ENCODE measurements at regions of chrX and their contacts with region 1.

Region 1: GRCh38 chrX:84729809-84730208 is 227.6 kb upstream of the HDX start:
- DNase-seq: peak; percentile 31
- ATAC-seq: peak; percentile 98
- H3K4me3 ChIP-seq: no peak overlapping the region
- H3K27ac ChIP-seq: no peak overlapping the region
- H3K4me1 ChIP-seq: peaks cover 2% of the 10 kb centered on the region
- H3K27me3 ChIP-seq: no peaks in the 10 kb centered on the region
- CTCF ChIP-seq: peak; percentile 73
- POLR2A ChIP-seq: no peak
- RAD21 ChIP-seq: peak; percentile 69

Region 2: DNA sequence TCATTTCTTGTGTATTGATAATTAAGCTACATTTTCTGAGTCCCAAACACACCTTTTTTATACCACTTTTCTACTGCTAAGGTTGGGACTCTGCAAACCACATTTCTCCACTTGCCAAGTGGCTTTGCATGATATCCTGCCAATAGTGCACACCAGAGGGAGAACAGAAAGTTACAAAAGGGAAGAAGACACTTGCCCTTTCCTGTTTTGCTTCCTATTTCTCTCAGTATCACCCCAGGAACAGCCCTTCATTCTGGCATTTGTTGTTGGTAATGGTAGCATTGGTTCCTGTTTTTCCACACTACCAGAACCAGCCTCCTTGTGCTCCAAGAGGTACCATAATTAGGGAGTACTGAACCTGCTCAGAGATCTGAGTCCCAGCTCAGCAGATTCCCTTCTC is 314.7 kb before region 1 on chrX:
- CTCF ChIA-PET with region 1: no interaction called
- POLR2A ChIA-PET with region 1: no interaction called
- dilution Hi-C with region 1: no loop called
- in situ Hi-C with region 1: no loop called
- intact Hi-C with region 1: no loop called
- DNase-seq: no peak
- ATAC-seq: no peak
- H3K4me3 ChIP-seq: no peak overlapping the region
- H3K27ac ChIP-seq: no peak overlapping the region
- H3K4me1 ChIP-seq: no peaks in the 10 kb centered on the region
- H3K27me3 ChIP-seq: no peaks in the 10 kb centered on the region
- CTCF ChIP-seq: no peak
- POLR2A ChIP-seq: no peak
- RAD21 ChIP-seq: no peak

Region 3: GRCh38 chrX:84907324-84907968 is 177.6 kb after region 1 on chrX:
- CTCF ChIA-PET with region 1: interaction called, 3 read pairs
- POLR2A ChIA-PET with region 1: no interaction called
- dilution Hi-C with region 1: no loop called
- in situ Hi-C with region 1: no loop called
- intact Hi-C with region 1: loop called (anchors 1 kb)
- DNase-seq: peak; percentile 5
- ATAC-seq: peak; percentile 49; the same call in 1 of the 2 replicates
- H3K4me3 ChIP-seq: no peak overlapping the region
- H3K27ac ChIP-seq: no peak overlapping the region
- H3K4me1 ChIP-seq: no peaks in the 10 kb centered on the region
- H3K27me3 ChIP-seq: no peaks in the 10 kb centered on the region
- CTCF ChIP-seq: peak; percentile 37
- POLR2A ChIP-seq: no peak
- RAD21 ChIP-seq: peak; percentile 26

Region 4: DNA sequence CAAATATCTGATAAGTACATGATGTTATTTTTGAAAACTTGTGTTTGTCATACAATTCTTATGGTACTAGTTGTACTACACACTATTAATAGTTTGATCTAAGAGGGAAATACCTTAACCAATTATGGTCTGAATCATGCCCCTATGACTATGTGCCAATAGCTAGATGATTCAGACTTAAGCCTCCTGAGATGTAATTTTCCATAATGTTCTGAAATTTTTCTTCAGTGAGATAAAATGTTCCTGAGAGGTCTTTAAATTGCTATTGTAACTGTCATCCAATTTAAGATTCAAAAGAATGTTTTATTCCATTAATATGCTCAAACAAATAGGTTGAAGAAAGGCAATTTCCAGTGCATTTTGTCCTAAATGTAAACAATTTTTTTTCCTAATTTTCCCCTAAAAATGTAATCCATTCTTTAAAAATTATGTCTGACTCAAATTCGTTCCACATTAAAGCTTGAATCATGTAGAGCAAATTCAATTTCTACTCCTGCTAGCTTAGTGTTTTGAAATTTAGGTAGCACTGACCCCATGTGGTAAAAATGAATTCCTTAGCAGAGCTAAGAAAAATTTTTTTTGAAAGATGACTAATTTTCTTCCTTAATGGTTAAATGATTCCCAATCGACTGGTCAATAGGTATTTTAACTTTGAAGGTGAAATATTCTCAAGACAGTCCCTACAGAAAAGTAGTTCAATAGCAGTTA is 323.0 kb after region 1 on chrX:
- CTCF ChIA-PET with region 1: interaction called, 3 read pairs
- POLR2A ChIA-PET with region 1: no interaction called
- dilution Hi-C with region 1: no loop called
- in situ Hi-C with region 1: no loop called
- intact Hi-C with region 1: loop called (anchors 1 kb)
- DNase-seq: peak; percentile 86
- ATAC-seq: peak; percentile 81
- H3K4me3 ChIP-seq: no peak overlapping the region
- H3K27ac ChIP-seq: peak overlapping the region; percentile 49; the same call in 1 of the 2 replicates
- H3K4me1 ChIP-seq: no peaks in the 10 kb centered on the region
- H3K27me3 ChIP-seq: no peaks in the 10 kb centered on the region
- CTCF ChIP-seq: peak; percentile 53
- POLR2A ChIP-seq: no peak
- RAD21 ChIP-seq: peak; percentile 51

Region 5: DNA sequence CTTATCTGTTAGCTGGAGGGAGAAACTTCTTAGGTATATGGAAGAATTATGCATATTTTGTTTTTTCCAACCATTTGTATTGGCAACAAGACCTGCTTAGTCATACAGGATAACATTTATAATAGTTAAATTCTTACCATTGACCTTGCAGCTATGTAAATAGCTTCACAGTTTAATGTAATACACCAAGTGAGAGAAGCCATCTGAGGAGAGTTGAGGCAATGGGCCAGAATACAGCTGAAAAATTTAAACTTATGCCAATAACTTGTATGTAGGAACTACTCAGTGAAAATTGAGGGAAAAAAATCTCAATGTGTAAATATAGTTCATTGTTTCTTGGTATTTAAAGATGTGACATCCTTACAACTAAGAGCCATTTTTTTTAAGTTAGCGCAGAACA is 1692.0 kb after region 1 on chrX:
- CTCF ChIA-PET with region 1: no interaction called
- POLR2A ChIA-PET with region 1: no interaction called
- dilution Hi-C with region 1: no loop called
- in situ Hi-C with region 1: no loop called
- intact Hi-C with region 1: no loop called
- DNase-seq: no peak
- ATAC-seq: no peak
- H3K4me3 ChIP-seq: no peak overlapping the region
- H3K27ac ChIP-seq: no peak overlapping the region
- H3K4me1 ChIP-seq: no peaks in the 10 kb centered on the region
- H3K27me3 ChIP-seq: no peaks in the 10 kb centered on the region
- CTCF ChIP-seq: no peak
- POLR2A ChIP-seq: no peak
- RAD21 ChIP-seq: no peak

Measured in IMR-90 (cell line).